Ascending aorta (tissue), 2 donors: ENCODE measurements at regions of chr2 and their contacts with region 1.

Region 1: GRCh38 chr2:96116879-96117697 is 717 bp upstream of the ADRA2B start:
- DNase-seq: no peak
- H3K4me3 ChIP-seq: peak overlapping the region; percentile 76 to 78
- H3K27ac ChIP-seq: peak overlapping the region in 1 of 2 donors; percentile 64
- H3K4me1 ChIP-seq: peaks cover 0 to 4% of the 10 kb centered on the region in 2 donors
- H3K27me3 ChIP-seq: peaks cover 7% of the 10 kb centered on the region
- CTCF ChIP-seq: peak; percentile 31 to 94 (median 57)

Region 2: DNA sequence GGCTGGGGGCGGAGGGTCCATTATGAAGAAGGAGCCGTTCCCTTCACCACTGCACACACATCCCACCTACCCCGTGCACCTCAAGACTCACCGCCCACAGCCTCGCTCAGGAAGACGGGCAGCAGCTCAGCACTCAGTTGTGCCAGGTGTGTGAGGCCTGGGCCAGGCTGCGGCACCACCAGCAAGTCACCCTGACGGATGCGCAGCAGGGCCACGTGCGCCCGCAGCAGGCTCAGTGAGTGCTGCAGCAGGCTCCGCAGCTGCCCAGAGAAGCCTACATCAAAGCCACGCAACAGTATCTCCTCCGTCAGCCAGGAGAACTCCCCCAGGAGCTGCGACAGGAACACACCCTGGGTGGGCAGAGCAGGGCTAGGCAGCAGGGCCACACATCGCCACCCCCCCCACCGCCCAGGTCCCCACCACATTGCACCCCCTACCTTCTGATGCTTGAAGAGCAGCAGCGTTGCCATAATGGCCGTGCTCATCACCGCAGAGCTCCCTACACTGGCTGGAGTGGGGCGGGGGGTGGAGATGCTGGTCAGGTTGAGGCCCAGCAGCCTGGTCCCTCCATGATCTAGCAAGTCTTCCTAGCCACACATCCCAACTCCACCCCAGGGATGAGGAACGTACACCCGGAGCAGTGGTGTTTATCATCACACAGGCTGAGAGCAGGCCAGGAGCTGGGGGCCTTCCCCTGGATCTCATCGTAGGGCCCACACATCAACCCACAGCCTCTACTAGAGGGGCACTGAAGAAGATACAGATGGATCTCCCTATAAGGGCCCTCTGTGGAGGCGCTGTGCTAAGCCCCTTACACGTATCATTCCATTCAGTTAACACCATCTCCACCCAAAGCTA is 92.5 kb before region 1 on chr2:
- intact Hi-C with region 1: loop called (anchors 10 kb)
- DNase-seq: peak in 1 of 2 donors; percentile 58
- H3K4me3 ChIP-seq: no peak overlapping the region
- H3K27ac ChIP-seq: no peak overlapping the region
- H3K4me1 ChIP-seq: no peaks in the 10 kb centered on the region
- H3K27me3 ChIP-seq: no peaks in the 10 kb centered on the region
- CTCF ChIP-seq: no peak

Region 3: GRCh38 chr2:96072746-96073145 is 44.3 kb before region 1 on chr2:
- intact Hi-C with region 1: loop called (anchors 5 kb)
- DNase-seq: no peak
- H3K4me3 ChIP-seq: no peak overlapping the region
- H3K27ac ChIP-seq: no peak overlapping the region
- H3K4me1 ChIP-seq: no peaks in the 10 kb centered on the region
- H3K27me3 ChIP-seq: no peaks in the 10 kb centered on the region
- CTCF ChIP-seq: no peak

Region 4: DNA sequence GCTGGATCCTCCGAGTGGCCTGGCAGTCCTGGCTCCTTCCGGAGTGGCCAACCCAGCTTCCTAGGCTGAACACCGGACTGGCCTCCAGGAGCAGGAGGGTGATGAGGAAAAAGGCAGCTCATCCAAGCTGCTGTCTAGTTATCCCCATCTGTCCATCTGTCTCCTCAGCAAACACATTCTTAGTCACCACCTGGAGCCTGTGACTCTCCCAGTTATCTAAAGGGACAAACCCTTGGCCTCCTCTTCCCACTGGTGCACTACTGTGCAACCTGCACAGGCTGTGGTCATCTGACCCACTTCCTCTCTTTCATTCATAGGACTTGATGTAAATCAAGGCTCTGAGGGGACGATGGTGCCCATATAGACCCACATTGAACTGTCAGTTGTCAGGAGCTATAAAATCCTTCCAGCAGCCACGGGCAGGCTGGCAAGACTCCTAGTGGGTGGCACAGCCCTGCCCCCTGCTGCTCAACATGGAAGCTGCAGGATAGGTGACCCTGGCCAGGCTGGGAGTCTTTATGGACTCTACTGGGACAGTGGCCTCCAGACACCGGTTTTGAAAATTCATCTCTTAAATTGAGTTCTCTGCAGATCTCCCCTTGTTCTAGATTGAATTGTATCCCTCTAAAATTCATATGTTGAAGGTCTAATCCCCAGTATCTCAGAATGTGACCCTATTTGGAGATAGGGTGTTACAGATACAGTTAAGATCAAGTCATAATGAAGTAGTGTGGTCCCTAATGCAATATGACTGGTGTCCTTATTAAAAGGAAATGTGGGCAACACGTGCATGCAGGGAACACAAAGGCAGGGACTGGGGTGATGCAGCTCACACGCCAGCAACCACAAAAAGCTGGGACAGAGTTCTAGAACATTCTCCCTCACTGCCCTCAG is 57.4 kb after region 1 on chr2:
- intact Hi-C with region 1: loop called (anchors 10 kb)
- DNase-seq: peak; percentile 30 to 84
- H3K4me3 ChIP-seq: no peak overlapping the region
- H3K27ac ChIP-seq: no peak overlapping the region
- H3K4me1 ChIP-seq: no peaks in the 10 kb centered on the region
- H3K27me3 ChIP-seq: no peaks in the 10 kb centered on the region
- CTCF ChIP-seq: peak; percentile 79 to 88 (median 86)